Activated CD8-positive, alpha-beta T cell treated with anti-CD3 and anti-CD28 coated beads for 36 hours (primary cell): ENCODE measurements at regions of chr20 and their contacts with region 1.

Region 1: GRCh38 chr20:740141-740540 is 28.2 kb downstream of the SLC52A3 start:
- DNase-seq: no peak
- ATAC-seq: no peak
- H3K4me3 Mint-ChIP-seq: no peak overlapping the region
- H3K27ac Mint-ChIP-seq: no peak overlapping the region
- H3K4me1 Mint-ChIP-seq: no peaks in the 10 kb centered on the region
- H3K27me3 Mint-ChIP-seq: peaks cover 4% of the 10 kb centered on the region
- CTCF ChIP-seq: no peak

Region 2: GRCh38 chr20:561437-562231 is 178.5 kb before region 1 on chr20:
- CTCF ChIA-PET with region 1: interaction called, 29 read pairs
- POLR2A ChIA-PET with region 1: interaction called, 3 read pairs
- intact Hi-C with region 1: loop called (anchors 10 kb)
- DNase-seq: peak; percentile 74
- ATAC-seq: peak; percentile 87
- H3K4me3 Mint-ChIP-seq: no peak overlapping the region
- H3K27ac Mint-ChIP-seq: no peak overlapping the region
- H3K4me1 Mint-ChIP-seq: no peaks in the 10 kb centered on the region
- H3K27me3 Mint-ChIP-seq: peaks cover 5% of the 10 kb centered on the region
- CTCF ChIP-seq: peak; percentile 82

Region 3: DNA sequence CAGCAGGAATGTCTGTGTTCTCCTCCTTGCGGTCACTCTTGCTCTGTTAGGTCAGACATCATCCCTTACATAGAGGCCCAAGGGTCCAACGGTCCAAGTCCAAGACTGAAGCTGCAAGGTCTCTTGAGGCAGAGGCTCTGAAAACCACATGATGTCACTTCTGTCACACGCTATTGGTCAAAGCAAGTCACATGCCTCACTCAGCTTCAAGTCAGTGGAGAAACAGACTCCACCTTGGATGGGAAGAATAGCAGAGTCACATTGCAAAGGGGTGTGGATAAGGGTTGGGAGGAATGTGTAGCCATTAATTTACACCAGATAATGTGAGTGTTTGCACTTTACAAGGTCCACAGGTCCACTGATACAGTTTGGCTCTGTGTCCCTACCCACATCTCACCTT is 10.7 kb after region 1 on chr20:
- CTCF ChIA-PET with region 1: interaction called, 11 read pairs
- POLR2A ChIA-PET with region 1: interaction called, 3 read pairs
- intact Hi-C with region 1: no loop called
- DNase-seq: no peak
- ATAC-seq: no peak
- H3K4me3 Mint-ChIP-seq: no peak overlapping the region
- H3K27ac Mint-ChIP-seq: no peak overlapping the region
- H3K4me1 Mint-ChIP-seq: peaks cover 6% of the 10 kb centered on the region
- H3K27me3 Mint-ChIP-seq: peaks cover 1% of the 10 kb centered on the region
- CTCF ChIP-seq: no peak

Region 4: GRCh38 chr20:775679-776135 is 35.6 kb after region 1 on chr20:
- CTCF ChIA-PET with region 1: interaction called, 10 read pairs
- POLR2A ChIA-PET with region 1: no interaction called
- intact Hi-C with region 1: no loop called
- DNase-seq: no peak
- ATAC-seq: no peak
- H3K4me3 Mint-ChIP-seq: no peak overlapping the region
- H3K27ac Mint-ChIP-seq: no peak overlapping the region
- H3K4me1 Mint-ChIP-seq: no peaks in the 10 kb centered on the region
- H3K27me3 Mint-ChIP-seq: peaks cover 9% of the 10 kb centered on the region
- CTCF ChIP-seq: no peak

Region 5: GRCh38 chr20:868279-868678 is 128.1 kb after region 1 on chr20:
- CTCF ChIA-PET with region 1: no interaction called
- POLR2A ChIA-PET with region 1: no interaction called
- intact Hi-C with region 1: no loop called
- DNase-seq: no peak
- ATAC-seq: no peak
- H3K4me3 Mint-ChIP-seq: no peak overlapping the region
- H3K27ac Mint-ChIP-seq: no peak overlapping the region
- H3K4me1 Mint-ChIP-seq: no peaks in the 10 kb centered on the region
- H3K27me3 Mint-ChIP-seq: no peaks in the 10 kb centered on the region
- CTCF ChIP-seq: no peak